Activated CD4-positive, alpha-beta T cell treated with anti-CD3 and anti-CD28 coated beads, Interleukin-2, amount 10 ng/mL, durations not matched to agents 24 days and 14 days (primary cell): ENCODE measurements at regions of chr21 and their contacts with region 1.

Region 1: DNA sequence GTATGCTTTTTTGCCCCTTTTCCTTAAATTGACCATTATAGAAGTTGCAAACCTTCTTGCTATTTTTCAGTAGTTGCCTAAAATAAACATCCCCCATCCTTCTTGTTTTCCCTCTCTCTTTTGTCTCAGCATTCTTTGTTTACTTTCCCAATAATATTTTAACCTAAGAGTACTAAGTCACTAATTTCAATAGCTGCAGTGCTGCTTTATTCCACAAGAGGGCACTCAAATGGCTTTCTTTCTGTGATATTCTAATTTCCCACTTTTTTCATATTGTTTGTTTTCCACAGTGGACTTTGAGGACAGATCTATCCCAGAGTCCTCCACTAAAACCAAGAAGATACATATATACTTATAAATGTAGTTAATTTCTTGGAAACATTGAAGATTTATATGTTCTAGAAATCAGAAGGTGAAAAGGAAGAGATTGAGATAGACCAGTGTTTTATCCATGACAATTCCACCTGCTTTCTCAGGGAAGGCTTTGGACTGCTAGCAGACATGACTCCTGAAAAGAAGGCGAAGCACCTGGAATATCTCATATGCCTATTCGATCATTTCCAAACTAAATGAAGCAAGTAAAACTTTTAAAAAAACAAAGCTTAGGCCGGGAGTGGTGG is 104.8 kb upstream of the GRIK1 start:
- DNase-seq: peak; percentile 58
- H3K4me3 Mint-ChIP-seq: no peak overlapping the region
- H3K27ac Mint-ChIP-seq: no peak overlapping the region
- H3K4me1 Mint-ChIP-seq: no peaks in the 10 kb centered on the region
- H3K27me3 Mint-ChIP-seq: no peaks in the 10 kb centered on the region

Region 2: DNA sequence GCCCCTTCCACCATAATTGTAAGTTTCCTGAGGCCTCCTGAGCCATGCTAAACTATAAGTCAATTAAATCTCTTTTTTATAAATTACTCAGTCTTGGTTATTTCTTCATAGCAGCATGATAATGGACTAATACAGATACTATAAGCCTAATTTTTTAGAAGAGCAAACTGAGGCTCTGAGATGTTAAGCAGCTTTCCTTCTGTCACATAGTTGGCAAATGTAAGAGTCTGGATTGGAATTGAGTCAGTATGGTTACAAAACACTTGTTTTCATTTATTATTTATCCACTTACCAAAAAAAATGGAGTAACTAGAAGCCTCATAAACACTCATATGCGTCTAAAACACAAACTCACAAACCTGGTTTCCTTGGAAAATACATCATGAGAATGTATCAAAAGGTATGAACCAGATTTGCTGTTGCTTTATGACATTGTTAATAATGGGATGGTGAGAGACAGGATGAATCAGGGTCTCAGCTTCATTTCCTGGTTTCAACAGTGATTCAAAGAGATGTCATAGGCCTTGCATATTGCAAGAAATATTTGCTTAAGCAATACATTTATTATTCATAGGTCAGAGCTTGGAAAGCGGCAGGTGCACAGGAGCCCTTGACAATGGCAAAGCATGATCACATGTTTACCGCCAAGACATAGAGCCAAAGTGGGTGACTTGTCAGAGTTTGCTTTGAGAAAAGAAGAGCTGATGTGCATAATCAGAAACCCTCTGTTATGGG is 326.3 kb before region 1 on chr21:
- intact Hi-C with region 1: no loop called
- DNase-seq: no peak
- H3K4me3 Mint-ChIP-seq: no peak overlapping the region
- H3K27ac Mint-ChIP-seq: no peak overlapping the region
- H3K4me1 Mint-ChIP-seq: no peaks in the 10 kb centered on the region
- H3K27me3 Mint-ChIP-seq: no peaks in the 10 kb centered on the region

Region 3: GRCh38 chr21:30194701-30195299 is 150.2 kb after region 1 on chr21:
- intact Hi-C with region 1: loop called (anchors 5 kb)
- DNase-seq: peak; percentile 60
- H3K4me3 Mint-ChIP-seq: no peak overlapping the region
- H3K27ac Mint-ChIP-seq: no peak overlapping the region
- H3K4me1 Mint-ChIP-seq: no peaks in the 10 kb centered on the region
- H3K27me3 Mint-ChIP-seq: no peaks in the 10 kb centered on the region